GM13977 (cell line): ENCODE measurements at regions of chr5 and their contacts with region 1.

Region 1: GRCh38 chr5:130871346-130872086 is 293.5 kb downstream of the HINT1 start:
- DNase-seq: peak; percentile 37
- CTCF ChIP-seq: peak; percentile 58

Region 2: GRCh38 chr5:130692770-130693169 is 178.7 kb before region 1 on chr5:
- in situ Hi-C with region 1: no loop called
- DNase-seq: no peak
- CTCF ChIP-seq: no peak

Region 3: GRCh38 chr5:131109540-131110255 is 238.2 kb after region 1 on chr5:
- in situ Hi-C with region 1: loop called (anchors 25 kb)
- DNase-seq: peak; percentile 53
- CTCF ChIP-seq: peak; percentile 78

Region 4: DNA sequence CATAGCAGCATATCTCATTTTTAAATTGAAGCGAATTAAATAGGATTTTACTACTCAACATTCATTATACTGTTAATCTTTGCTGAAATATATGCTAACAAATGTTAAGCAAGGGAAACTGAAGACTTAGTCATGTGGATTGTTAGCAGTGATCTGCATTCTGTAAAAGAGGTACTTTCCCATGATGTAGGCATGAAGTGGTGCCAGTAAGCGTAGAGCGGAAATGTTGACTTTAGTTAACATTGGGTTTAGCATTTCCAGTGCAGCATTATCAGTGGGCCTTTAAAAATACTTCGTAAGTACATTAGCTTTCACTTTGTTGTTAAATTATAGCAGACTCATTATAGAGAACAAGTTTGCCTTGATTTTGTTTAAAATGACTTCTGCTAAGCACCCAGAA is 522.6 kb after region 1 on chr5:
- in situ Hi-C with region 1: loop called (anchors 10 kb)
- DNase-seq: peak; percentile 54
- CTCF ChIP-seq: no peak